PC-3 (cell line): ENCODE measurements at regions of chr1 and their contacts with region 1.

Region 1: DNA sequence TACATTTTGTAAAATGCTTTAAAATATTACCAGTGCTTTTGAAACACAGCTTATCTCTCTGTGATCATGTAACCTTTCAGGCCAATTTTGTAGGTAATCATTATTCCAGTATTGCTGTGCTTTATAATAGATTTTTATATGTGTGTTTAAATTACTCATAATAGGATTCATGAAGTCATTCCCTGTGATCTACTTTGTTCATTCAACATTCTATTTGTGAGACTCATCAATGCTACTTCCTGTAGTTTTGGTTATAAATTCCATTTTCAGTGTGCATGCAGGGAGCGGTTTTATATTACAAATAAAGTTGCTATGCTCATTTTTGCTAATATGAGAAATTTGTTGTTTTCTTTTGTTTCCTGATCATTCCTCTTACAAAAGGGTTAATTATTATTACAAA is 4.1 kb upstream of the OR2M5 start:
- DNase-seq: peak; percentile 92
- ATAC-seq: peak; percentile 90
- H3K4me3 ChIP-seq: peak overlapping the region; percentile 38
- H3K27ac ChIP-seq: peak overlapping the region; percentile 85
- H3K4me1 ChIP-seq: peaks cover 45% of the 10 kb centered on the region
- H3K27me3 ChIP-seq: no peaks in the 10 kb centered on the region
- CTCF ChIP-seq: no peak

Region 2: GRCh38 chr1:248013229-248013710 is 127.6 kb before region 1 on chr1 and contains the start of gene OR2L5:
- CTCF ChIA-PET with region 1: no interaction called
- POLR2A ChIA-PET with region 1: no interaction called
- intact Hi-C with region 1: no loop called
- DNase-seq: peak; percentile 43
- ATAC-seq: peak; percentile 87
- H3K4me3 ChIP-seq: no peak within 1 kb of the TSS
- H3K27ac ChIP-seq: no peak within 1 kb of the TSS
- H3K4me1 ChIP-seq: no peaks in the 10 kb centered on the region
- H3K27me3 ChIP-seq: no peaks in the 10 kb centered on the region
- CTCF ChIP-seq: no peak
- total RNA-seq, gene OR2L5: 0.07 and 0.35 TPM in 2 replicates

Region 3: DNA sequence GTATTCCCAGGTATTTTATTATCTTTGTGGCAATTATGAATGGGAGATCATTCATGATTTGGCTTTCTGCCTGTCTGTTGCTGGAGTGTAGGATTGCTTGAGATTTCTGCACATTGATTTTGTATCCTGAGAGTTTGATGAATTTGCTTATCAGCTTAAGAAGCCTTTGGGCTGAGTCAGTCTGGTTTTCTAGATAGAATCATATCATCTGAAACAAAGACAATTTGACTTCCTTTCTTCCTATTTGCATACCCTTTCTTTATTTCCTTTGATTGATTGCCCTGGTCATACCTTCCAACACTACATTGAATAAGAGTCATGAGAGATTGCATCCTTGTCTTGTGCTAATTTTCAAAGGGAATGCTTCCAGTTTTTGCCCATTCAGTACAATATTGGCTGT is 86.2 kb before region 1 on chr1:
- CTCF ChIA-PET with region 1: no interaction called
- POLR2A ChIA-PET with region 1: no interaction called
- intact Hi-C with region 1: loop called (anchors 5 kb)
- DNase-seq: no peak
- ATAC-seq: peak; percentile 28
- H3K4me3 ChIP-seq: no peak overlapping the region
- H3K27ac ChIP-seq: no peak overlapping the region
- H3K4me1 ChIP-seq: 0 out of 2 replicates have a peak, but pooled peaks cover 3% of the 10 kb centered on the region
- H3K27me3 ChIP-seq: no peaks in the 10 kb centered on the region
- CTCF ChIP-seq: no peak

Region 4: GRCh38 chr1:248155927-248156326 is 15.1 kb after region 1 on chr1:
- CTCF ChIA-PET with region 1: no interaction called
- POLR2A ChIA-PET with region 1: no interaction called
- intact Hi-C with region 1: loop called (anchors 1 kb)
- DNase-seq: no peak
- ATAC-seq: no peak
- H3K4me3 ChIP-seq: no peak overlapping the region
- H3K27ac ChIP-seq: no peak overlapping the region
- H3K4me1 ChIP-seq: peaks cover 9% of the 10 kb centered on the region
- H3K27me3 ChIP-seq: no peaks in the 10 kb centered on the region
- CTCF ChIP-seq: no peak

Region 5: GRCh38 chr1:248189026-248189425 is 48.2 kb after region 1 on chr1:
- CTCF ChIA-PET with region 1: no interaction called
- POLR2A ChIA-PET with region 1: no interaction called
- intact Hi-C with region 1: no loop called
- DNase-seq: no peak
- ATAC-seq: no peak
- H3K4me3 ChIP-seq: no peak overlapping the region
- H3K27ac ChIP-seq: no peak overlapping the region
- H3K4me1 ChIP-seq: no peaks in the 10 kb centered on the region
- H3K27me3 ChIP-seq: no peaks in the 10 kb centered on the region
- CTCF ChIP-seq: no peak

Region 6: DNA sequence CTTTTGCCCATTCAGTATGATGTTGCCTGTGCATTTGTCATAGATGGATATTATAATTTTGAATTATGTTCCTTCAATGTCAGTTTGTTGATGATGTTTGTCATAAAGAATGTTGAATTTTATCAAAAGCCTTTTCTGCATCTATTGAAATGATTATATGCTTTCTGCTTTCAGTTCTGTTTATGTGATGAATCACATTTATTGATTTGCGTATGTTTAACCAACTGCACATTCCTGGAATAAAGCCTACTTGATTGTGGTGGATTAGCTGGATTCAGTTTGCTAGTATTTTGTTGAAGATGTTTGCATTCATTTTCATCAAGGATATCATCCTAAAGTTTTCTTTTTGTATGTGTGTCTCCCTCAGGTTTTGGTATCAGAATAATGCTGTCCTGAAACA is 84.7 kb after region 1 on chr1:
- CTCF ChIA-PET with region 1: no interaction called
- POLR2A ChIA-PET with region 1: no interaction called
- intact Hi-C with region 1: loop called (anchors 1 kb)
- DNase-seq: peak; percentile 61
- ATAC-seq: peak; percentile 78
- H3K4me3 ChIP-seq: no peak overlapping the region
- H3K27ac ChIP-seq: no peak overlapping the region
- H3K4me1 ChIP-seq: peaks cover 7% of the 10 kb centered on the region; the same call in 1 of the 2 replicates
- H3K27me3 ChIP-seq: no peaks in the 10 kb centered on the region
- CTCF ChIP-seq: no peak